PC-9 (cell line): ENCODE measurements at regions of chr2 and their contacts with region 1.

Region 1: GRCh38 chr2:145752091-145752806 is 1232.3 kb upstream of the ZEB2 start:
- DNase-seq: peak in 1 of 2 experiments; percentile 41
- H3K4me3 ChIP-seq: no peak overlapping the region
- H3K27ac ChIP-seq: no peak overlapping the region
- H3K4me1 ChIP-seq: no peaks in the 10 kb centered on the region
- H3K27me3 ChIP-seq: no peaks in the 10 kb centered on the region
- CTCF ChIP-seq: peak; percentile 70

Region 2: GRCh38 chr2:144937910-144938709 is 814.1 kb before region 1 on chr2:
- CTCF ChIA-PET with region 1: no interaction called
- POLR2A ChIA-PET with region 1: no interaction called
- intact Hi-C with region 1: no loop called
- DNase-seq: no peak
- H3K4me3 ChIP-seq: no peak overlapping the region
- H3K27ac ChIP-seq: no peak overlapping the region
- H3K4me1 ChIP-seq: 0 out of 2 replicates have a peak, but pooled peaks cover 5% of the 10 kb centered on the region
- H3K27me3 ChIP-seq: no peaks in the 10 kb centered on the region
- CTCF ChIP-seq: no peak

Region 3: DNA sequence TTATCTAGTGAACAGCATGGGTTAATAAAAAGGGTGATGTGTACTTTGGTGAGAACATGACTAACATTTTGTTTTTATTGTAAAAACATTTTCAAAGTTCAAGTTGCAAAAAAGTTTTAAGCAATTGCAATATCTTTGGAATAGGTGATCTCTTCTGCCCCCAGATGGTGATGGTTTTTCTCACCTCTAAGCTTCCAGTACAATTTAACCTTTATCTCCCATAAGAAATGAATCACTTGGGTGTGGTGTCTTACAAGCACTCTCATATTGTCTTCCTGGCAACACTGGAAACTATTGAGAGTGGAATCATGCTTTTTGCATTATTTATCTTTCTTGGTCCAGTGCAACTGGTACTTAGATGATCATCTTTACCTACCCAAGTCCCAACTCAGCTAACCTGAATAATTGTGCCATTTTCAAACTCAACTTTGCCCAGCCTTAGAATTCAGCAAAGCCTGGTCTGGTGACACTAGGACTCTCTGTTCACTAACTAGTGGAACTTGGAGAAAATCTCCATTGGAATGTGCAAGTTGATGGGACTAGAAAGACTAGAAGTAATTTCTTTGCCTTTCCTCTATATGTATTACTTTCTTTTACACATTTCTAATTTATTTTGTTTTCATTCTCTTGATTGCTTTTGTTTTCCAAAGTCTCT is 267.7 kb before region 1 on chr2:
- CTCF ChIA-PET with region 1: no interaction called
- POLR2A ChIA-PET with region 1: no interaction called
- intact Hi-C with region 1: loop called (anchors 2 kb)
- DNase-seq: peak; percentile 27 to 59
- H3K4me3 ChIP-seq: no peak overlapping the region
- H3K27ac ChIP-seq: no peak overlapping the region; the same call in 1 of the 2 replicates
- H3K4me1 ChIP-seq: 0 out of 2 replicates have a peak, but pooled peaks cover 5% of the 10 kb centered on the region
- H3K27me3 ChIP-seq: no peaks in the 10 kb centered on the region
- CTCF ChIP-seq: 0 out of 2 replicates have a peak, but pooled peaks have one; percentile 26

Region 4: GRCh38 chr2:145593832-145594614 is 158.2 kb before region 1 on chr2:
- CTCF ChIA-PET with region 1: no interaction called
- POLR2A ChIA-PET with region 1: no interaction called
- intact Hi-C with region 1: loop called (anchors 5 kb)
- DNase-seq: peak; percentile 51 to 83
- H3K4me3 ChIP-seq: no peak overlapping the region
- H3K27ac ChIP-seq: peak overlapping the region; percentile 28; the same call in 1 of the 2 replicates
- H3K4me1 ChIP-seq: peaks cover 17% of the 10 kb centered on the region
- H3K27me3 ChIP-seq: no peaks in the 10 kb centered on the region
- CTCF ChIP-seq: no peak

Region 5: GRCh38 chr2:145687442-145688134 is 64.7 kb before region 1 on chr2:
- CTCF ChIA-PET with region 1: interaction called, 3 read pairs
- POLR2A ChIA-PET with region 1: no interaction called
- intact Hi-C with region 1: loop called (anchors 5 kb)
- DNase-seq: no peak
- H3K4me3 ChIP-seq: no peak overlapping the region
- H3K27ac ChIP-seq: 0 out of 2 replicates have a peak overlapping the region, but pooled peaks have one; percentile 6
- H3K4me1 ChIP-seq: peaks cover 36% of the 10 kb centered on the region
- H3K27me3 ChIP-seq: no peaks in the 10 kb centered on the region
- CTCF ChIP-seq: no peak

Region 6: DNA sequence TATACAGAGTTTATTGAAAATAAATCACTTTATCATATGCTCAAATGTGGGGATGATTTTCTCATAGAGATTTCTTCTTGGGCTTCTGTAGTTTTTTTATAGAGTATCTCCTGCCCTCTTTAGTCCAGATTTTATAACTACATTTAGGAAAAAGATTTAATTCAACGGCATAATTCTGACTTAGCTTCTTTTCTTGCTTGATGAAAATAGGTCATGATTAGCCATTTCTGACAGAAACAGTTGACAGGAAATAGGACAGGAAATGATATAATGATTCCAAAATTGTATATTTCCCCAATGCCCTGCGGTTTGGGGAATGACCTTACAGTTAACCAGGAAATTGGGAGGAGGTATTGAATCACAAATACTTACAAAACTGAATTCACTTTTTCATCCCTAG is 560.6 kb after region 1 on chr2:
- CTCF ChIA-PET with region 1: no interaction called
- POLR2A ChIA-PET with region 1: no interaction called
- intact Hi-C with region 1: loop called (anchors 10 kb)
- DNase-seq: no peak
- H3K4me3 ChIP-seq: no peak overlapping the region
- H3K27ac ChIP-seq: no peak overlapping the region
- H3K4me1 ChIP-seq: no peaks in the 10 kb centered on the region
- H3K27me3 ChIP-seq: no peaks in the 10 kb centered on the region
- CTCF ChIP-seq: peak; percentile 26; the same call in 1 of the 2 replicates